Activated CD8-positive, alpha-beta T cell treated with anti-CD3 and anti-CD28 coated beads, Interleukin-2, amount 10 ng/mL, durations not matched to agents 7 days and 5 days (primary cell): ENCODE measurements at regions of chr12 and their contacts with region 1.

Region 1: DNA sequence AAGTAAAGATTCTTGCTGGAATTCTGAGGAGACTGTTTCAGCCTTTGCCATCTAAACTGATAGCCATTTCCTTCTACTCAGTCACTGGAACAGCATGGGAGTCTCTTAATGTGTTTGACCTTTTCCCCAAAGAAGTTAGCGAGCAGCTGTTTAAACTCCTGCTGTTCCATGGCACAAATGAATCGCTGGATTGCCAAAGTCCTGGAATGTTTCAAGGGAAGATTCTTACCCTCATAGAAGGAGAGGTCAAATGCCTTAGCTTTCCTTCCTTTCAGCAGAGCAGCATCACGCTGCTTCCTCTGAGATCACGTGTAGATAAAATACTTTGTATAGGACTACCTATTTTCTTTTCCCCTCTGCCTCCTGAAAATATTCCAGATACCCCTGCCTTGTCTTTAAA is 10.5 kb upstream of the NR2C1 start:
- DNase-seq: no peak
- ATAC-seq: no peak
- H3K4me3 Mint-ChIP-seq: no peak overlapping the region
- H3K27ac Mint-ChIP-seq: no peak overlapping the region
- H3K4me1 Mint-ChIP-seq: no peaks in the 10 kb centered on the region
- H3K27me3 Mint-ChIP-seq: peaks cover 5% of the 10 kb centered on the region

Region 2: DNA sequence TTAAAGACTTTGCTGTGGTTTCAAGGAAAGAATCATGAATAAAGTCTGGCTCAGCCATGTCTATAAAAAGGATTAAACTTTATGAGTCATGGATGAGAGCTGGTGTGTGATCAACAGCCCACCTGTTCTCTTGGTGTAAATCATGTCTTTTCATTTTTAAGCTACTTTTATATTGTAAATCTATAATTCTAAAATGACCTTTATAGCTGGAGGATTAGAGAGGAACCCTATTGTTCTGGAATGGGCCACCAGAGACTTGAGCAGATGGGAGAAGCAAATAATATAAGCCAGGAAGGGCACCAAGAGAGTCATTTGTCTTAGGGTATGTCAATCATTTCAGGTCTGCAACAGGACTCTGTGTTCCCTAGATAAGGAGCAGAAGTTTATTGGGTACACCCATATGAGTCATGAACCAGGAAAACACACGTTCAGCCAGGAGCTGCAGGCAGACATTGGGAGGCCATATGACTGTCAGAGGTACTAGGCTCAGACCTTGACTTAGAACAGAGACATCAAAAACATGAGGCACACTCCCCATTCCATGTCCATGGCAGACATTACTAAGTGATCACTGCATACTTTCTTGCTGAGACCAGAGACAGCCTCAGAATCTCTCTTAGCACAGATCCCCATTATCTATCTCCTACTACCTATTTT is 129.8 kb before region 1 on chr12:
- CTCF ChIA-PET with region 1: no interaction called
- POLR2A ChIA-PET with region 1: no interaction called
- DNase-seq: no peak
- ATAC-seq: no peak
- H3K4me3 Mint-ChIP-seq: no peak overlapping the region
- H3K27ac Mint-ChIP-seq: no peak overlapping the region
- H3K4me1 Mint-ChIP-seq: peaks cover 8% of the 10 kb centered on the region
- H3K27me3 Mint-ChIP-seq: peaks cover 33% of the 10 kb centered on the region

Region 3: GRCh38 chr12:95072900-95073697 is 10.8 kb before region 1 on chr12 and contains the start of gene NR2C1:
- CTCF ChIA-PET with region 1: interaction called, 14 read pairs
- POLR2A ChIA-PET with region 1: interaction called, 3 read pairs
- DNase-seq: peak; percentile 96
- ATAC-seq: peak; percentile 97
- H3K4me3 Mint-ChIP-seq: peak within 1 kb of the TSS; percentile 79
- H3K27ac Mint-ChIP-seq: peak within 1 kb of the TSS; percentile 93
- H3K4me1 Mint-ChIP-seq: peaks cover 16% of the 10 kb centered on the region
- H3K27me3 Mint-ChIP-seq: peaks cover 4% of the 10 kb centered on the region
- total RNA-seq, gene NR2C1: 30.5 to 32.8 TPM

Region 4: DNA sequence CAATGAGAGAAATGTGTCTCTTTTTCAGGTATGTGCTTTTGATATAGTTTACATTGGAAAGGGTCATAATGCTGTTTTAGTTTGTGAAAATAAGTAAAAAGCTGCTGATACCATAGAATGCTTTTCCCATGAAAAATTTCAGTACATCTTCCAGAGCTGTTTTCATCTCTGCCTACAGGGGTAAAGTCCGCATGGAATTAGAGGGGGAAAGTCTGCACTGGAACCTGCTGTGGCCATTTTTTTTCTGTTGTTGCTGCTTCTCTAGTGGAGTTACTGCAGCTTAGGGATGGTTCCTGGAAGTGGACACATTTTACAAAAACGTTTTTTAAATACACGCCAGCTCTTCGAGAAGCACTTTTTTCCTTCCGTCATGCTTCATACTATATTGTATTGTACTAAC is 215.0 kb after region 1 on chr12:
- CTCF ChIA-PET with region 1: no interaction called
- POLR2A ChIA-PET with region 1: no interaction called
- DNase-seq: no peak
- ATAC-seq: no peak
- H3K4me3 Mint-ChIP-seq: no peak overlapping the region
- H3K27ac Mint-ChIP-seq: no peak overlapping the region
- H3K4me1 Mint-ChIP-seq: peaks cover 7% of the 10 kb centered on the region
- H3K27me3 Mint-ChIP-seq: no peaks in the 10 kb centered on the region